ENCODE measurements at regions of chr4 and their contacts with region 1.

Region 1: GRCh38 chr4:119041951-119042560 is 93.6 kb upstream of the MYOZ2 start:
- DNase-seq: peak; percentile 58
- H3K4me3 Mint-ChIP-seq: no peak overlapping the region
- H3K27ac Mint-ChIP-seq: no peak overlapping the region
- H3K4me1 Mint-ChIP-seq: peaks cover 7% of the 10 kb centered on the region
- H3K27me3 Mint-ChIP-seq: peaks cover 3% of the 10 kb centered on the region

Region 2: DNA sequence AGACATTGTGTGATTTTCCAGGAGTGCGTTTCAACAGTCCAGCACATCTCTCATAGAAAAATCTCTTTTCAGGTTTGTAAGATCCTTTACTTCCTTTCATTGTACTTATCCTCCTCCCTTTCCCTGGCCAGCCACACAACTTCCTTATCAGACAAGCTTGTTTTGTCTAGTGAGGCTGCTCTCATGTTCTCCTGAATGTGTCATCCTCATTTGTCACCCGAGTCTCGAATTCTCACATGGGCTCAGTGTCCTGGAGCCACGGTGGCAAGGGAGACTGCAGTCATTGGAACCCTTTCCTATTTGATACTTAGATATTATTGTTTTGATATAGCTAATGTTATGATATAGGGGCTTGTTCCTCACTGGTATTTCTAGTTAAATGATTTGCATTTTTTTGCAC is 136.5 kb before region 1 on chr4:
- CTCF ChIA-PET with region 1: no interaction called
- POLR2A ChIA-PET with region 1: no interaction called
- DNase-seq: no peak
- H3K4me3 Mint-ChIP-seq: no peak overlapping the region
- H3K27ac Mint-ChIP-seq: no peak overlapping the region
- H3K4me1 Mint-ChIP-seq: no peaks in the 10 kb centered on the region
- H3K27me3 Mint-ChIP-seq: peaks cover 25% of the 10 kb centered on the region

Region 3: DNA sequence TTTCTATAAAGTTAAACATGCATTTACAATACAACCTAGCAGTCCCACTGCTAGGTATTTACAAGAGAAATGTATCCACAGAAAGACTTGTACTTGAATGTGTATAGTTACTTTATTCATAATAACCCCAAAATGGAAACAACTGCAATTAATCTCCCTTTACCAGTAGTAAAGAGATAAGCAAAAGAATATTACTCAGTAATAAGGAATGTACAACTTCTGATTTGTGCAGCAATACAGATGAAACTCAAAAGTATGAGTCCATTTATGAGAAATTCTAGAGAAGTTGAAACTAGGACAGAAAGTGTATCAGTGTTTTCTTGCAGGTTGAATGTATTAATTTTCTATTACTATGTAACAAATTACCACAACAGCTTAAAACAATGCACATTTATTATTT is 185.6 kb after region 1 on chr4:
- CTCF ChIA-PET with region 1: no interaction called
- POLR2A ChIA-PET with region 1: no interaction called
- DNase-seq: no peak
- H3K4me3 Mint-ChIP-seq: no peak overlapping the region
- H3K27ac Mint-ChIP-seq: no peak overlapping the region
- H3K4me1 Mint-ChIP-seq: no peaks in the 10 kb centered on the region
- H3K27me3 Mint-ChIP-seq: no peaks in the 10 kb centered on the region

Region 4: DNA sequence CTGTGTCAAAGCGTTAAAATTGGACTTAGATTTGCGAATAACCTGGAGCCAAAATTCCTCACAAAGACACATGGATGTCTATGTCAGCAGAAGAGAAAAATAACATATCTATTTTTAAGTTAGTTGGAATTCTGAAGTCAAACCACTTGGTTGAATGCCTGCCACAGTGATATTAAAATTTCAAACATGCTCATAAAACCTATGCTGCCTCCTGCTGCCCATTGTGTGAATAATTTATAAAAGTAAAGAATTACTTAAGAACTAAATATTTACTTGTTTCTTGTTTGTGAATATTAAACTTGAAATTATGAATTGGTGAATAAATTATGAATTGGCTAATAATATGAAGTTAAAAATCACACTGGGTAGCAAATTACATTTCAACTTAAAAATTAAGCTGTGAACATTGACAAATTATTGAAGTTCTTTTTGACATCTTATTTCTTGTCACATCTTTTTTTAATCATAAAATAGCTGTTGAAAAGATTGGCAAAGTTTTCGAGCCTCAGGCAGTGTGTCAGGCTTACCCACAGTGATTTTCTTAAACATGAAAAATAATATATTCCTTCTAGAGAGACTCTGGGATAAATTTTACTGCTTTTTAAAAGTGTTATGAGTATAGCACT is 244.4 kb after region 1 on chr4:
- CTCF ChIA-PET with region 1: interaction called, 16 read pairs
- POLR2A ChIA-PET with region 1: no interaction called
- DNase-seq: peak; percentile 24
- H3K4me3 Mint-ChIP-seq: no peak overlapping the region
- H3K27ac Mint-ChIP-seq: no peak overlapping the region
- H3K4me1 Mint-ChIP-seq: peaks cover 13% of the 10 kb centered on the region
- H3K27me3 Mint-ChIP-seq: no peaks in the 10 kb centered on the region